Testis (tissue), 5 donors: ENCODE measurements at regions of chr7 and their contacts with region 1.

Region 1: GRCh38 chr7:26376175-26376917 is 84.7 kb downstream of the SNX10 start:
- DNase-seq: peak; percentile 79
- H3K4me3 ChIP-seq: peak overlapping the region; percentile 61 to 65
- H3K27ac ChIP-seq: peak overlapping the region; percentile 70 to 78
- H3K4me1 ChIP-seq: no peaks in the 10 kb centered on the region
- H3K27me3 ChIP-seq: no peaks in the 10 kb centered on the region
- CTCF ChIP-seq: peak in 1 of 3 experiments; percentile 6
- POLR2A ChIP-seq: no peak

Region 2: DNA sequence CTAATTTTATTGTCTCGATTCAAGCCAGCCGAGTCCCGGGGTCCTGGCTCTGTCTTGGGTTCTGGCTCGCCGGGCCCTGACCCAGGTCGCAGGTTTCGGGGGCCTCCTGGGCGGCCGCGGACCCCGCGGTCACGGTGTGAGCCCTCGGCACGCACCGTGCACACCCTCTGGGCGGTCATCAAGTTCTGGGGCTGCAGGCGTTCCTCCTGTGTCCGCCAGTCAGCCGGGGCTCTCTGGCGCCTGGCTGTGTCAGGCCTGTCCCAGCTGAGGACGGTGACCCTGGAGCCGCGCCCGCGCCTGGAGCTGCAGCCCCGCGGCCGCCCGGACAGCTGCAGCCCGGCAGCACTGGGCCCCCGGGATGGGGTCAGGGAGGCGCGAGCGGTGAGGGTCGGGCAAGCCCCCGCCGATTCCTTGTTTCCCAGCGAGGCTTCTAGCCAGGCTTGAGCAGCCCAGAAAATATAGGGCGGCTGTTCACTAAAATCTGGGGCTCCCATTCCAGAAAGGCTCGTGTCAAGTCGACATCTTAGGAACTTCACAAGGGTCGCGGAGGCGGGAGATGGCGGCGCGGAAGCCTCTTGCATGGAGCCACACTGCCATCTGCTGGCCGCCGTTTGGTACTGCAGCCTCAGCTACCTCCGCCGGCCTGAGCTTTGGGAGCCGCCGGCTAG is 784.3 kb after region 1 on chr7:
- intact Hi-C with region 1: loop called (anchors 10 kb)
- DNase-seq: peak; percentile 95
- H3K4me3 ChIP-seq: peak overlapping the region; percentile 46 to 62
- H3K27ac ChIP-seq: no peak overlapping the region
- H3K4me1 ChIP-seq: peaks cover 10% of the 10 kb centered on the region
- H3K27me3 ChIP-seq: peaks cover 6% of the 10 kb centered on the region
- CTCF ChIP-seq: peak; percentile 98 to 100 (median 99)
- POLR2A ChIP-seq: no peak